Naive thymus-derived CD4-positive, alpha-beta T cell (primary cell): ENCODE measurements at regions of chr4 and their contacts with region 1.

Region 1: GRCh38 chr4:82428969-82429727 is 1.1 kb downstream of the HNRNPDL start:
- DNase-seq: peak; percentile 90 to 99 (median 94)
- ATAC-seq: peak; percentile 79
- H3K4me3 ChIP-seq: peak overlapping the region; percentile 96
- H3K4me3 Mint-ChIP-seq: peak overlapping the region; percentile 98 to 100 (median 99)
- H3K27ac ChIP-seq: peak overlapping the region; percentile 99
- H3K27ac Mint-ChIP-seq: peak overlapping the region; percentile 98 to 100 (median 99)
- H3K4me1 ChIP-seq: peaks cover 28 to 39% of the 10 kb centered on the region in 2 donors
- H3K4me1 Mint-ChIP-seq: peaks cover 40 to 81% (median 69%) of the 10 kb centered on the region in 7 donors
- H3K27me3 ChIP-seq: no peaks in the 10 kb centered on the region
- H3K27me3 Mint-ChIP-seq: peaks cover 0 to 2% (median 0%) of the 10 kb centered on the region in 5 donors

Region 2: GRCh38 chr4:82352913-82353366 is 76.2 kb before region 1 on chr4:
- CTCF ChIA-PET with region 1: interaction called, 6 read pairs
- POLR2A ChIA-PET with region 1: interaction called, 12 read pairs
- intact Hi-C with region 1: no loop called
- DNase-seq: no peak
- ATAC-seq: no peak
- H3K4me3 ChIP-seq: no peak overlapping the region
- H3K4me3 Mint-ChIP-seq: no peak overlapping the region
- H3K27ac ChIP-seq: peak overlapping the region; percentile 7
- H3K27ac Mint-ChIP-seq: peak overlapping the region; percentile 32 to 87 (median 44)
- H3K4me1 ChIP-seq: peaks cover 14 to 22% of the 10 kb centered on the region in 2 donors
- H3K4me1 Mint-ChIP-seq: peaks cover 16 to 67% (median 59%) of the 10 kb centered on the region in 7 donors
- H3K27me3 ChIP-seq: no peaks in the 10 kb centered on the region
- H3K27me3 Mint-ChIP-seq: no peaks in the 10 kb centered on the region

Region 3: GRCh38 chr4:82373816-82374625 is 55.1 kb before region 1 on chr4 and contains the start of gene HNRNPD:
- CTCF ChIA-PET with region 1: interaction called, 18 read pairs
- POLR2A ChIA-PET with region 1: interaction called, 95 read pairs
- intact Hi-C with region 1: loop called (anchors 1 kb)
- DNase-seq: peak; percentile 79 to 96 (median 93)
- ATAC-seq: peak; percentile 93
- H3K4me3 ChIP-seq: peak within 1 kb of the TSS; percentile 94
- H3K4me3 Mint-ChIP-seq: peak within 1 kb of the TSS; percentile 91 to 100 (median 97)
- H3K27ac ChIP-seq: peak within 1 kb of the TSS; percentile 98
- H3K27ac Mint-ChIP-seq: peak within 1 kb of the TSS; percentile 95 to 100 (median 99)
- H3K4me1 ChIP-seq: peaks cover 28 to 31% of the 10 kb centered on the region in 2 donors
- H3K4me1 Mint-ChIP-seq: peaks cover 35 to 62% (median 54%) of the 10 kb centered on the region in 7 donors
- H3K27me3 ChIP-seq: no peaks in the 10 kb centered on the region
- H3K27me3 Mint-ChIP-seq: peaks cover 0 to 3% (median 0%) of the 10 kb centered on the region in 5 donors
- total RNA-seq, gene HNRNPD: 200 to 355 (median 238) TPM

Region 4: DNA sequence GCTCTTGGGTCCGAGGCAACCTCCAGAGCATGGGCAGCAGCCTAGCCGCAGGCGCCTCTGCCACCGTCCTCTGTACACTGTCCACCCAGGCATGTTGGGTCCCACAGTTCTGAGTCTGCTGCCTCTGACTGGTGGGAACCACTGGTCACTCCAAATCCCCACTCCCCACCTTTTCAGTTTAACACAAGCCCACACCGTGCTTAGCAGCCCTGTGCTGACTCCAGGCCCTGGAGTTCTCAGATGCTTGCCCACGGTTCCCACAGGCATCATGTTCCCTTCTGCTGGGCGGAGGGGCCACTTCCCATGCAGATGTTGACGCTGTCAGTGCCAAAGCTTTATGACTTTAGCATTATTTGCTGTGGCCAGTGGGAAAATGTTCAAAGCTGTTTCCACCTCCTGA is 264.9 kb after region 1 on chr4:
- CTCF ChIA-PET with region 1: no interaction called
- POLR2A ChIA-PET with region 1: no interaction called
- intact Hi-C with region 1: no loop called
- DNase-seq: no peak
- ATAC-seq: no peak
- H3K4me3 ChIP-seq: no peak overlapping the region
- H3K4me3 Mint-ChIP-seq: no peak overlapping the region
- H3K27ac ChIP-seq: no peak overlapping the region
- H3K27ac Mint-ChIP-seq: no peak overlapping the region
- H3K4me1 ChIP-seq: no peaks in the 10 kb centered on the region
- H3K4me1 Mint-ChIP-seq: no peaks in the 10 kb centered on the region
- H3K27me3 ChIP-seq: no peaks in the 10 kb centered on the region
- H3K27me3 Mint-ChIP-seq: peaks cover 0 to 11% (median 5%) of the 10 kb centered on the region in 5 donors

Region 5: DNA sequence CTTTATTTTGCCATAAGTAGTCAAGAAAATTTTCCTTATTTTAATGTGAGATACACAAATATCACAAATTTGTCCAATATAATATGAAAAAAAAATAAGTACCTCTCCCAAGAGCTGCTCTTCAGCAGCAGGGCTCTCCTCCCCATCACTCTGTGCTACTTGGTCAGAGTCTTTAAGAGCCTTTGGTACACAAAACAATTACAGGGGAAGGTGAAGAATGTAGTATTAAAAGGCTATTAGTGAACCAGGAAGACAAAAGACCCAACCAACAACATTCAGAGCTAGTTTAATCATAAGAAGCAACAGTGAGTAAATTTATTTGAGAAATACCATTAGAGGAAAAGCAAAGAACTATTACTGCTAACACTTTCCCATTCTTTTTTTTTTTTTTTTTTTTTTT is 432.4 kb after region 1 on chr4:
- CTCF ChIA-PET with region 1: no interaction called
- POLR2A ChIA-PET with region 1: no interaction called
- intact Hi-C with region 1: no loop called
- DNase-seq: no peak
- ATAC-seq: no peak
- H3K4me3 ChIP-seq: no peak overlapping the region
- H3K4me3 Mint-ChIP-seq: no peak overlapping the region
- H3K27ac ChIP-seq: no peak overlapping the region
- H3K27ac Mint-ChIP-seq: peak overlapping the region in 4 of 9 donors; percentile 2 to 57 (median 16)
- H3K4me1 ChIP-seq: peaks cover 10 to 15% of the 10 kb centered on the region in 2 donors
- H3K4me1 Mint-ChIP-seq: peaks cover 19 to 31% (median 26%) of the 10 kb centered on the region in 7 donors
- H3K27me3 ChIP-seq: no peaks in the 10 kb centered on the region
- H3K27me3 Mint-ChIP-seq: no peaks in the 10 kb centered on the region

Region 6: GRCh38 chr4:82890901-82891706 is 462.0 kb after region 1 on chr4 and contains the start of gene SEC31A:
- CTCF ChIA-PET with region 1: no interaction called
- POLR2A ChIA-PET with region 1: interaction called, 3 read pairs
- intact Hi-C with region 1: loop called in 1 of 2 experiments (anchors 1 kb)
- DNase-seq: peak; percentile 89 to 98 (median 95)
- ATAC-seq: peak; percentile 97
- H3K4me3 ChIP-seq: peak within 1 kb of the TSS; percentile 96
- H3K4me3 Mint-ChIP-seq: peak within 1 kb of the TSS; percentile 86 to 96 (median 93)
- H3K27ac ChIP-seq: peak within 1 kb of the TSS; percentile 99
- H3K27ac Mint-ChIP-seq: peak within 1 kb of the TSS; percentile 92 to 99 (median 97)
- H3K4me1 ChIP-seq: peaks cover 11 to 12% of the 10 kb centered on the region in 2 donors
- H3K4me1 Mint-ChIP-seq: peaks cover 18 to 51% (median 41%) of the 10 kb centered on the region in 7 donors
- H3K27me3 ChIP-seq: no peaks in the 10 kb centered on the region
- H3K27me3 Mint-ChIP-seq: no peaks in the 10 kb centered on the region
- total RNA-seq, gene SEC31A: 137 to 168 (median 149) TPM

Region 7: GRCh38 chr4:83217721-83218522 is 788.8 kb after region 1 on chr4:
- CTCF ChIA-PET with region 1: no interaction called
- POLR2A ChIA-PET with region 1: interaction called, 3 read pairs
- intact Hi-C with region 1: loop called in 1 of 2 experiments (anchors 10 kb)
- DNase-seq: peak in 8 of 9 donors; percentile 52 to 91 (median 84)
- ATAC-seq: peak; percentile 95
- H3K4me3 ChIP-seq: peak overlapping the region; percentile 23
- H3K4me3 Mint-ChIP-seq: peak overlapping the region; percentile 57 to 84 (median 72)
- H3K27ac ChIP-seq: peak overlapping the region; percentile 78
- H3K27ac Mint-ChIP-seq: peak overlapping the region; percentile 88 to 96 (median 92)
- H3K4me1 ChIP-seq: peaks cover 65 to 77% of the 10 kb centered on the region in 2 donors
- H3K4me1 Mint-ChIP-seq: peaks cover 56 to 83% (median 74%) of the 10 kb centered on the region in 7 donors
- H3K27me3 ChIP-seq: no peaks in the 10 kb centered on the region
- H3K27me3 Mint-ChIP-seq: no peaks in the 10 kb centered on the region